IMR-90 (cell line): ENCODE measurements at regions of chr14 and their contacts with region 1.

Region 1: GRCh38 chr14:38171197-38171596 is 36.5 kb upstream of the SSTR1 start:
- DNase-seq: peak; percentile 33
- ATAC-seq: no peak
- H3K4me3 ChIP-seq: no peak overlapping the region
- H3K27ac ChIP-seq: no peak overlapping the region
- H3K4me1 ChIP-seq: no peaks in the 10 kb centered on the region
- H3K27me3 ChIP-seq: no peaks in the 10 kb centered on the region
- CTCF ChIP-seq: no peak
- POLR2A ChIP-seq: no peak
- RAD21 ChIP-seq: no peak

Region 2: DNA sequence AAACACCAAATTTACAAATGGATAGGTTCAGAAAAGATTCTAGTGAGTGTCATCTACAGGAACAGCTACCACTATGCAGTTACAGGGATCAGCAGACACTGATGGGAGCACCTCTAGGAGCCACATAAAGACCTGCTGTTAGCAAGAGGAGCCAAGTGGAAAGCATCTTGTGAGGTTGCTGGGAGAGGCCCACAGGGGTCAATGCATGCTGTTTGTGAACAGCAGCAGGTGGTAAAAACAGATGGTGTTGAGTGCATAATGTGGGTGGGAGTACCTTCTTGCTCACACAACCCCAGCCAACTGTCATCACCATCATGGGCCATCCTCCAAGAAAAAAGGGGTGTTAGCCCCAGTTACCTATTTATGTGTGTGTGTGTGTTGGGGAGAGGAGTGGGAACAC is 178.7 kb before region 1 on chr14:
- CTCF ChIA-PET with region 1: no interaction called
- POLR2A ChIA-PET with region 1: no interaction called
- dilution Hi-C with region 1: no loop called
- in situ Hi-C with region 1: no loop called
- intact Hi-C with region 1: loop called (anchors 10 kb)
- DNase-seq: no peak
- ATAC-seq: no peak
- H3K4me3 ChIP-seq: no peak overlapping the region
- H3K27ac ChIP-seq: no peak overlapping the region
- H3K4me1 ChIP-seq: 0 out of 2 replicates have a peak, but pooled peaks cover 2% of the 10 kb centered on the region
- H3K27me3 ChIP-seq: no peaks in the 10 kb centered on the region
- CTCF ChIP-seq: no peak
- POLR2A ChIP-seq: no peak
- RAD21 ChIP-seq: no peak

Region 3: DNA sequence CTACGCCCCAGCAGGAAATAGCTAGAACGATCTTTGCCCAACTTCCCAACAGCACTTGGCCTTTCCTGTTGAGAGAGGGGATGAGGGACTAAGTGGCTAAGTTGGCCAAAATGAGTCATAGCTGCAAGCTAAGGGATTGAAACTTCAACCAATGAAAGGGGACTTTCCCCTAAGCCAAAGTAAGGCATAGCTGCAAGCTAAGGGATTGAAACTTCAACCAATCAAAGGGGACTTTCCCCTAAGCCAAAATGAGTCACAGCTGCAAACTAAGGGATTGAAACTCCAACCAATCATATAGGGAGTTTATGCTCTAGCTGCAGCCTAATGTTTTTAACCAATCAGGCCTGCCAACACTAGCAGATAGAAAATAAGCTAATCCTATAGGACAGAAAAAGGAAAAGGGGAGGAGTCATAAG is 64.0 kb before region 1 on chr14:
- CTCF ChIA-PET with region 1: no interaction called
- POLR2A ChIA-PET with region 1: no interaction called
- dilution Hi-C with region 1: no loop called
- in situ Hi-C with region 1: no loop called
- intact Hi-C with region 1: no loop called
- DNase-seq: peak; percentile 20
- ATAC-seq: no peak
- H3K4me3 ChIP-seq: no peak overlapping the region
- H3K27ac ChIP-seq: no peak overlapping the region
- H3K4me1 ChIP-seq: no peaks in the 10 kb centered on the region
- H3K27me3 ChIP-seq: no peaks in the 10 kb centered on the region
- CTCF ChIP-seq: no peak
- POLR2A ChIP-seq: no peak
- RAD21 ChIP-seq: no peak

Region 4: DNA sequence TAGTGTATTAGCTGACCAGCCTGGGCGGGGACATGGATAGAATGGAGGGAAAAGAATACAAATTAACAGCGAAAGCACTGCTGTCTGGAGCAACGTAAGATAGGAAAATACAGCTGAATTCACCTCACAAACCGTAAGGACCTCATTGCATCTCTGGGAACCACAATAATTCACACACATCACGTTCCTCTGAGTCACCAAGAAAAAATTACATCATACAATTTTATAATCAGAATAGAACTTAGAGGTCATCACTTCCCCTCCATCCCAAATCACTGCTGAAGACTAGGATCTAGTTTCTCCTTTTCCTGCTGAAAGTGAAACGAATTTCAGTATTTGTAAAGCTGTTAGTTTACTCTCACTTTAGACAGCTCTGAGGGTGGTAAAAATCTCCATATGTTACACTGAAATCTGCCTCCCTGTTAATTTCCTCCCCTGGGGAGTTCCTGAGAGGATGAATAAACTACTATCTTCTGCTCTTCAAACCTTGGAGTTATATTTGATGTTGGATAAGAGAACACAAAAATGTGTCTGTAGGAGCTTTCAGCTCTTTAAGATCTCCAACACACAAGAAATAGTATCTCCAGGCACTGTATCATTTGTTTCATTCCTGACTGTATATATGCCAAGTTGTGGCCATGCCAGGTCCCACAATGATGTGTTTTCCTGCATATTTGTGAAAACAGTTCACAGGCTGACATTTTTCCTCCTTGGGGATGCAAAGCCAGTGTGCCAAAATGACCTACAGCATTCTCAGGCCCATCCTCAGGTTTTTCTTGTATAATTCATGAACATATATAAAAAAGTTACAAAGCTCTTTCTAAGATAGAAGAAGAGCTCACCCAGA is 27.3 kb before region 1 on chr14:
- CTCF ChIA-PET with region 1: no interaction called
- POLR2A ChIA-PET with region 1: no interaction called
- dilution Hi-C with region 1: no loop called
- in situ Hi-C with region 1: no loop called
- intact Hi-C with region 1: loop called (anchors 2 kb)
- DNase-seq: peak; percentile 92
- ATAC-seq: peak; percentile 76
- H3K4me3 ChIP-seq: peak overlapping the region; percentile 8; the same call in 1 of the 2 replicates
- H3K27ac ChIP-seq: peak overlapping the region; percentile 90
- H3K4me1 ChIP-seq: peaks cover 9% of the 10 kb centered on the region
- H3K27me3 ChIP-seq: no peaks in the 10 kb centered on the region
- CTCF ChIP-seq: no peak
- POLR2A ChIP-seq: peak; percentile 38; the same call in 1 of the 2 replicates
- RAD21 ChIP-seq: no peak

Region 5: DNA sequence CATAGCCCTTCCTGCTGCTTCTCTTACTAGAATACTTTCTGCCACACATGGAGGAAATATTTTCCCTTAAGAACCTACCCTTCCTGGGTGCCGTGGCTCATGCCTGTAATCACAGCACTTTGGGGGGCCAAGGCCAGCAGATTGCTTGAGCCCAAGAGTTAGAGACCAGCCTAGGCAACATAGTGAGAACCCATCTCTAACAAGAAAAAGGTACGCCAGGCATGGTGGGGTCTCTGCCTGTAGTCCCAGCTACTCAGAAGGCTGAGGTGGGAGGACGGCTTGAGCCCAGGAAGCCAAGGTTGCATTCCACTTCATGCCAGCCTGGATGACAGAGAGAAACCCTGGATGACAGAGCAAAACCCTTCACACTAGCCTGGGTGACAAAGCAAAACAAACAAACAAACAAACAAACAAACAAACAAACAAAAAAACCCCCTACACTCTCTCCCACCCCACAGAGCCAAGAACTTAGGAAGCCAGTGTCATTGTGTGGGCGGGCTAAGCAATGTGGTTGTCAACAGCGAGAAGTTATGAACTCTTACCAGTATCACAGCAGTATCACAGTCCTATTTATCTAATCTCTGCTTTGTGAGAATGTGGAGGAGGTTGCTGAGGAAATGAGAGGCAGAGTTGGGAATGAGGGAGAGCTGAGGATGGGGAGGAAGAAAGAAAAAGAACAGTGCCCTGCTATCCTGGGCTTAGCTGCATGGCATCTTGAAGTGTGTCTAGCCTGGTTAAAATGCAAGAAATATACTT is 138.5 kb after region 1 on chr14:
- CTCF ChIA-PET with region 1: no interaction called
- POLR2A ChIA-PET with region 1: no interaction called
- dilution Hi-C with region 1: no loop called
- in situ Hi-C with region 1: no loop called
- intact Hi-C with region 1: no loop called
- DNase-seq: no peak
- ATAC-seq: no peak
- H3K4me3 ChIP-seq: no peak overlapping the region
- H3K27ac ChIP-seq: no peak overlapping the region
- H3K4me1 ChIP-seq: no peaks in the 10 kb centered on the region
- H3K27me3 ChIP-seq: no peaks in the 10 kb centered on the region
- CTCF ChIP-seq: no peak
- POLR2A ChIP-seq: no peak
- RAD21 ChIP-seq: no peak

Region 6: DNA sequence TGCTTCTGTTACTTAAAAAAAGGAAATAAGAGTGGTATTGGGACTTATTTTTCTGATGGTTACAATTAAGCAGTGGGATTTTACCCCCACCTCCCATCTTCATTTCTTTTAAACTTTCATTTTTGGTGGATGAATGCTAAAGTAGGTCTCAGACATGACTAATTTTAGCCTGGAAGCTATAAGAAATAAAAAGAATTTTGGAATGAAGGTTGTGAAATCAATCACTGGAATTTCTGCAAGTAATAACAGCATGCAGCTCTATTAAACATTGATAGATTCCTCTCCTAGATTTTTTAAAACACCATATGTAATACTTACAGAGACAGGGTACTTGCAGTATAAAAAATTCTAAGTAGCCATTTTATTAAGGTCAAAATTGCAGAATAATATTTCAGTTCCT is 248.9 kb after region 1 on chr14:
- CTCF ChIA-PET with region 1: no interaction called
- POLR2A ChIA-PET with region 1: no interaction called
- dilution Hi-C with region 1: no loop called
- in situ Hi-C with region 1: no loop called
- intact Hi-C with region 1: no loop called
- DNase-seq: peak; percentile 46
- ATAC-seq: peak; percentile 68
- H3K4me3 ChIP-seq: no peak overlapping the region
- H3K27ac ChIP-seq: no peak overlapping the region
- H3K4me1 ChIP-seq: peaks cover 3% of the 10 kb centered on the region; the same call in 1 of the 2 replicates
- H3K27me3 ChIP-seq: no peaks in the 10 kb centered on the region
- CTCF ChIP-seq: no peak
- POLR2A ChIP-seq: no peak
- RAD21 ChIP-seq: no peak